ENCODE measurements at regions of chr1 and their contacts with region 1.

Region 1: DNA sequence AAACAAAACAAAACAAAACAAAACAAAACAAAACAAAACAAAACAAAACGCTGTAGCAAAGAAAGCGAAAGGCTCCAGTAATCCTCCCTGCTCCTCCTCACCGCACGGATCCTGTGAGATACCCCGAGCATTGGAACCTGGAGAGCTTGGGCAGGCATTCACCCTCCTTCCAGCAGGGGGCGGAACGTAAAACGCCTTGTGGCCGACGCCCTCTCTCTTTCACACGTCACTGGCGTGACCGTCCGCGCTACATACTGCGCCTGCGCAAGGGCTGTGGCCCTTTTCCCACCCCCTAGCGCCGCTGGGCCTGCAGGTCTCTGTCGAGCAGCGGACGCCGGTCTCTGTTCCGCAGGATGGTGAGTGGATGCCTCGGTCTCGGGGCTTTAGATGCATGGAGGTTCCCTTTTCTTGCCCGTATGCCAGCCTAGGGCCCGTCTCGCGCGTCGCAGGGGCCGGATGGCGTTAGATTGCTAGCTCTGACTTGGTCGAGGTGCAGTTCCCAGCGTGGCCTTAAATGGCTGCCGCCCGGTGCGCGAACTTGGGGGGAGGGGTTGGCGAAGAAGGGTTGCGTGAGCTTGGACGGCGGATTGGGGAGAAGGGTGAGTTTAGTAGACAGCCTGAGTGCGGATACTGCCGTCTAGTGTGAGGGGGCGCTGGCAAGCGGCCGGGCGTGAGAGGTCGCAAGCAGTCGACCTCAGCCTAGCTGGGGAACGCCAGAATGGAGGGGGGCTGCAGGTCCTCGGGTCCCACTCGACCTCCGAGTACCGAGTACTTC is at the start of gene RPL5:
- DNase-seq: peak; percentile 98
- H3K4me3 Mint-ChIP-seq: peak within 1 kb of the TSS; percentile 100
- H3K27ac Mint-ChIP-seq: peak within 1 kb of the TSS; percentile 95
- H3K4me1 Mint-ChIP-seq: peaks cover 39% of the 10 kb centered on the region
- H3K27me3 Mint-ChIP-seq: peaks cover 3% of the 10 kb centered on the region
- total RNA-seq, gene RPL5: 1,530 to 1,539 TPM

Region 2: DNA sequence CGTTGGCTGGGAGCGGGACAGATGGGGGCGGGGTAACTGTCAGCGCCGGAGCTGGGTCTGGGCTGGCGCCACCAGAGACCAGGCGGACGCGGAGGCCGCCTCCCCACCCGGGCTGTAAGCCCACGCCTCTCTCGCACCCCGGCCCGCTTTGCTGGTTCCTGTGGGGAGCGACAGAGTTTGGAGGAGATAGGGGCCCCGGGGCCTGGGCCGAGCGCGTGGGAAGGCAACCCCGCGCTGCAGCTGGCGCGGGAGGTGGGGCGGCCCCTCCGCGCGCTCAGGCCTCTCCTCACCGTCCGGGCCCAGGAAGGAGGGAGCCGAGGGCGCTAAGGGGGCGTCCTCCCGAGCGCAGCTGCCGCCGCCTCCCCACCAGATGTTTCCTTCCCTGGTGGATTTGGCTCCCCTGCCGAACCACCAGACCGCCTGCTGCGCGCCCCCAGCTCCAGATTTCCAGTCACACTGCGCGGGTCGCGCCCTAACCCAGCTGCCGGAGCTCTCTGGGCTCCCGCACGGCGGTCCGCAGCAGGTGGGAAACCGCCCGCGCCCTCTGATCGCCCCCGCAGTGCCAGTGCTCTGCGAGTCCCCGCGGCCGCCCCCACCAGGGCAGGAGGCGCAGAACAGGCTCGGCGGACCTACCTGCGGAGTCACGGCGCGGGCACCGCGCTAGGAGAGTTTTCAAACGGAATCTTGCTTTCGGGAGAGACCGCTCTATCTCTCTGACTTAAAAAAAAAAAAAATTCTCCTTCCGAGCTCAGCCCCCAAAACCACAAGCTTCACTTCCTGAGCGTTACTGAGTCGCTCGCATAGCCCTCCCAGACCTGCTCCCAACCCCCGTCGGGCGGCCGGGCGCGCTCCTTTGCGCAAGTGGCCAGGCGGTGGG is 346.3 kb before region 1 on chr1:
- CTCF ChIA-PET with region 1: interaction called, 4 read pairs
- POLR2A ChIA-PET with region 1: interaction called, 8 read pairs
- intact Hi-C with region 1: loop called (anchors 10 kb)
- DNase-seq: peak; percentile 93
- H3K4me3 Mint-ChIP-seq: peak overlapping the region; percentile 90
- H3K27ac Mint-ChIP-seq: peak overlapping the region; percentile 98
- H3K4me1 Mint-ChIP-seq: peaks cover 33% of the 10 kb centered on the region
- H3K27me3 Mint-ChIP-seq: no peaks in the 10 kb centered on the region

Region 3: GRCh38 chr1:92749024-92749634 is 82.8 kb before region 1 on chr1:
- CTCF ChIA-PET with region 1: interaction called, 14 read pairs
- POLR2A ChIA-PET with region 1: no interaction called
- intact Hi-C with region 1: no loop called
- DNase-seq: peak; percentile 36
- H3K4me3 Mint-ChIP-seq: no peak overlapping the region
- H3K27ac Mint-ChIP-seq: no peak overlapping the region
- H3K4me1 Mint-ChIP-seq: no peaks in the 10 kb centered on the region
- H3K27me3 Mint-ChIP-seq: peaks cover 4% of the 10 kb centered on the region

Region 4: DNA sequence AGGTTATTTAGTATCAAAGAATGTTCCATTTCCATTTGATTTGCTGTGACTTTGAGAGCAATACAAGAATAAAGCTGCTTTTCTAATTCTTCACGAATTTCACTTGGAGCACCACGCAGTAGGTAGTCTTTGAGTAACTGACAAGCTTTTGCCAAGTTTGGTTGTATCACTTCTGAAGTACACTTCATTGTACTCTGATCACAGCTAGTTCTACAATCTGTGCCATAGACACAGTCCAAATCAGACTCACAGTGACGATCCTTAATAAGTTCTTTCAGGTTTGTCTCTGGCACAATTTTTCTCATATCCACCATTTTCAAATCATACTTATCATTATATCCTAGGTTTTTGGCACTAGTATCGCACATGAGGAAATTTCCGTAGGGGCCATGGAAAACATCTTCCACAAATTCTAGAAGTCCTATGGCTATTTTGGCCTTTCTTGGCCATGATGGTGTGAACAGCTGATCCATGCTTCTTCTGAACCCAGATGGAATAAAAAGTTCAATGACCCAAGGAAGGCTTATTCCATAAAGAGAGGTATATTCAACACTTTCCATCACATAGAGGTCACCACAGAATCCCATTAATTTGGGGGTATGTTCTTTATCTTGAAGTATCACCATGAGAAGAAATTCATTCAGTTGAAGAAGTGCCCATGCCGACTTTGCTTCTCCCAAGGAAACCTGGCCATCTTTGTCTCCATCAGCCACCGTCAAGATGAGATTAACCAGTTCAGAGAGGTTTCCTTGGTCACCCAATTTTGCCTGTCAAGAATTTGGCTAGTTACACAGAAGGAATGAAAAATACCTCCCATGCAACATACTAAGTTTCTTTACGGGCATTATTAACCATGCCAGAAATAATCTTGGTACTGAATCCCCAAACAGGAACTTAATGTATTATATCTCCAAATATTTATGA is 11.7 kb after region 1 on chr1:
- CTCF ChIA-PET with region 1: interaction called, 17 read pairs
- POLR2A ChIA-PET with region 1: interaction called, 8 read pairs
- intact Hi-C with region 1: no loop called
- DNase-seq: no peak
- H3K4me3 Mint-ChIP-seq: no peak overlapping the region
- H3K27ac Mint-ChIP-seq: peak overlapping the region; percentile 28
- H3K4me1 Mint-ChIP-seq: peaks cover 22% of the 10 kb centered on the region
- H3K27me3 Mint-ChIP-seq: no peaks in the 10 kb centered on the region

Region 5: GRCh38 chr1:92994105-92994712 is 162.3 kb after region 1 on chr1:
- CTCF ChIA-PET with region 1: interaction called, 15 read pairs
- POLR2A ChIA-PET with region 1: interaction called, 3 read pairs
- intact Hi-C with region 1: no loop called
- DNase-seq: peak; percentile 66
- H3K4me3 Mint-ChIP-seq: no peak overlapping the region
- H3K27ac Mint-ChIP-seq: no peak overlapping the region
- H3K4me1 Mint-ChIP-seq: peaks cover 42% of the 10 kb centered on the region
- H3K27me3 Mint-ChIP-seq: no peaks in the 10 kb centered on the region

Region 6: DNA sequence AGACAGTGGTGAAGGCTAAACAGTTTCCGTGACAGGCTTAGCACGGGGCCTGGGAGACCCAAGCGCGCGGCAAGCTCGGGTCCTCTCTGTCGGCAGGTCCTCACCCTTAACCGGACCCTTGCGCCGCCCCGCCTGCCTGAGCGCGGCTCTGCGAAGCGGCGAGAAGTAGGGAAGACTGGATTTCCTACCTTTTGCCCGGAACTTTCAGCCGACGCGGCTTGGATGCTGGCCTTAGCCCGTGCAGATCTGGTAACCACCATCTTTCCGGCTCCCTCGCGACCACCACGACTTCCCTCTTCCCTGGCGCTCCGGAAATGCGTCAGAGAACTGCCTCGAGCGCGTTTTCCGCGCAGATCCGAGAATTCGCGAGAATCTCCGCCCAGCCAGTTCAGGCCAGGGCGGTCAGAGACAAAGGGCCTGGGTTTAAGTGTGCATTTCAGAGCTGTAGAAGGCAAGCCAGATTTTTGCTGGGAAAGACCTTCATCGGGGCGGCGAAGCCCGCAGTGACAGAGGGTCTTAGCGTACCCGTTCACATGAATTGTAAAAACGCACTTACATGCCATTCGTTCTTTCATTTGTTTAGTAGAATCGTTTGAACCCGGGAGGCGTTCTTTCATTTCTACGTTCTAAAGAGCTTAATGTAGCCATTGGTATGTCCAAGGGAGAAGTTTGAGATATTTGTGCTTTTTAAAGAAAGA is 1047.1 kb after region 1 on chr1 and contains the start of gene DNTTIP2:
- CTCF ChIA-PET with region 1: no interaction called
- POLR2A ChIA-PET with region 1: no interaction called
- intact Hi-C with region 1: loop called (anchors 5 kb)
- DNase-seq: peak; percentile 94
- H3K4me3 Mint-ChIP-seq: peak within 1 kb of the TSS; percentile 94
- H3K27ac Mint-ChIP-seq: peak within 1 kb of the TSS; percentile 98
- H3K4me1 Mint-ChIP-seq: peaks cover 42% of the 10 kb centered on the region
- H3K27me3 Mint-ChIP-seq: no peaks in the 10 kb centered on the region
- total RNA-seq, gene DNTTIP2: 84.4 to 91.1 TPM